ENCODE measurements at regions of chr2 and their contacts with region 1.

Region 1: DNA sequence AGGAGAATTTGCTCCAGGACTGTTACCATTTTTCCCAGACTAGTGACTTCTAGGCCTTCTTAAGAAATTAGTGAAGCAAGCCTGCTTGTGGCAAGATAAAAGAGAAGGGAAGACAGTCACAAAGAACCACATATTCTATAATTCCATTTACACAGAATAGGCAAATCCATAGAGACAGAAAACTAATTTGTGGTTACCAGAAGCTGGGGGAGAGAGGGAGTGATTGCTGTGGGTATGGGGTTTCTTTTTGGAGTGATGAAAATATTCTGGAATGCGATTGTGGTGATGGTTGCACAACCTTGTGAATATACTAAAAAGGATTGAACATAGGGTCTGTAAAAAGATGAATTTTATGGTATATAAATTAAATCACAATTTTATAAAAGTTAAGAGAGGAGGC is 37.5 kb upstream of the SIX2 start:
- DNase-seq: no peak
- H3K4me3 Mint-ChIP-seq: no peak overlapping the region
- H3K27ac Mint-ChIP-seq: no peak overlapping the region
- H3K4me1 Mint-ChIP-seq: no peaks in the 10 kb centered on the region
- H3K27me3 Mint-ChIP-seq: peaks cover 17% of the 10 kb centered on the region

Region 2: GRCh38 chr2:45089554-45090261 is 42.9 kb after region 1 on chr2:
- intact Hi-C with region 1: loop called (anchors 10 kb)
- DNase-seq: no peak
- H3K4me3 Mint-ChIP-seq: no peak overlapping the region
- H3K27ac Mint-ChIP-seq: no peak overlapping the region
- H3K4me1 Mint-ChIP-seq: no peaks in the 10 kb centered on the region
- H3K27me3 Mint-ChIP-seq: peaks cover 5% of the 10 kb centered on the region

Measured in activated CD4-positive, alpha-beta T cell treated with anti-CD3 and anti-CD28 coated beads, Interleukin-2, amount 10 ng/mL, durations not matched to agents 24 days and 14 days (primary cell).